Activated CD4-positive, alpha-beta memory T cell treated with anti-CD3 and anti-CD28 coated beads, Interleukin-2, amount 10 ng/mL, durations not matched to agents 7 days and 5 days (primary cell): ENCODE measurements at regions of chr6 and their contacts with region 1.

Region 1: GRCh38 chr6:90296346-90297114 is at the start of gene BACH2:
- DNase-seq: peak; percentile 95
- H3K4me3 Mint-ChIP-seq: peak within 1 kb of the TSS; percentile 87
- H3K27ac Mint-ChIP-seq: peak within 1 kb of the TSS; percentile 82
- H3K4me1 Mint-ChIP-seq: peaks cover 27% of the 10 kb centered on the region
- H3K27me3 Mint-ChIP-seq: peaks cover 44% of the 10 kb centered on the region
- total RNA-seq, gene BACH2: 30.3 to 31.1 TPM

Region 2: DNA sequence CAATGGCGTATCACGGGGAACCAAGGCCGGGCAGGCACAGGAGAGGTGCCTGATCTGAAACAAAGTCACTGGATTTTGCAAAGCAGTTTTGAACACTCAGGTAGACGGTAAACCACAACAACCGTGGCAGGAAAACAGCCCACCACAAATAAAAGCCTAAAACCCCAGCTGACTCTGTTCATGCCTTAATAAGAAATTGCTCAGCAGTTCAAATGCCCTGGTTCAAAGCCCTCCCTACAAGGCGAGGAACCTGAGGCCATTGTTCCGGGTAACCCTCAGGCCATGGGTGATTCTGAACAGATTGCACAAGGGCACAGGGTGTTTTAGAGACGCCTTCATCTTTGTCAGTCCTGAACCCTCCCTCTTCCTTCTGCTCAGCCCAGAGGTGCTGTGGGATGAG is 176.2 kb after region 1 on chr6:
- CTCF ChIA-PET with region 1: interaction called, 281 read pairs
- POLR2A ChIA-PET with region 1: interaction called, 76 read pairs
- DNase-seq: peak; percentile 75
- H3K4me3 Mint-ChIP-seq: peak overlapping the region; percentile 70
- H3K27ac Mint-ChIP-seq: peak overlapping the region; percentile 92
- H3K4me1 Mint-ChIP-seq: peaks cover 98% of the 10 kb centered on the region
- H3K27me3 Mint-ChIP-seq: peaks cover 12% of the 10 kb centered on the region